ENCODE measurements at regions of chr4 and their contacts with region 1.

Region 1: GRCh38 chr4:78644744-78645330 is 93.3 kb downstream of the ANXA3 start:
- DNase-seq: peak; percentile 57
- H3K4me3 ChIP-seq: no peak overlapping the region
- H3K27ac ChIP-seq: peak overlapping the region; percentile 88 to 89; a peak in 3 of 4 replicates
- H3K4me1 ChIP-seq: peaks cover 6 to 11% of the 10 kb centered on the region in 2 experiments
- H3K27me3 ChIP-seq: no peaks in the 10 kb centered on the region
- CTCF ChIP-seq: peak; percentile 87
- EP300 ChIP-seq: no peak
- RAD21 ChIP-seq: peak; percentile 74

Region 2: DNA sequence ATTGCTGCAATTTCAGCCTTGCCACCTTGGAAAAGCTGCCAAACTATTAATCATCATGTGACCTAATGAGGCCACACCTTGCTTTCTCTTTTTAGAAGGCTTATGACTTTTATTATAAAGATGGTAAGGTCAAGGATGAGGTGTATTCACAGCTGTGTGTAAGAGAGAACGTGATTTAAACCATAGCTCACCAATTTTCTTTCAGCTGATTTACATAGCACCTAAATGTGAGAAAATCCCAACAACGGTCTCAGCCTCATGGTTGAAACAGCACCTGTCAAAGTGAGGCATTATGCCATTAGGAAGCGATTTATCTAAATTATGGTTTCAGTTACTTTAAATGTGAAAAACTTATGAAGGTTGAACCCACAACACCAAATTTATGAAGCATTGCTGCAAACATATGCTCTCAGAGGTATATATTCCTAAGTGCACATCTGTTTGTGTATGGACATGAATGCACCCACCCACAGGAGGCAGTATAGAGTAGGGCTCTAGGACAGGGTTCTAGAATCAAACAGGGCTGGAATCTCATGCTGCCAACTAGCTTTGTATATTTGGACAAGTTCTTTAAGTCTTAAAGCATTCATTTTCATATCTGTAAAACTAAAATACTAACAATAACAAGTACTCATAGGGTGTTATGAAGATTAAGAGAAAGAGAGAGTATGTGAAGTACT is 52.6 kb before region 1 on chr4:
- CTCF ChIA-PET with region 1: no interaction called
- POLR2A ChIA-PET with region 1: no interaction called
- DNase-seq: peak; percentile 3
- H3K4me3 ChIP-seq: no peak overlapping the region
- H3K27ac ChIP-seq: no peak overlapping the region
- H3K4me1 ChIP-seq: no peaks in the 10 kb centered on the region
- H3K27me3 ChIP-seq: no peaks in the 10 kb centered on the region
- CTCF ChIP-seq: peak; percentile 44
- EP300 ChIP-seq: no peak
- RAD21 ChIP-seq: no peak

Region 3: DNA sequence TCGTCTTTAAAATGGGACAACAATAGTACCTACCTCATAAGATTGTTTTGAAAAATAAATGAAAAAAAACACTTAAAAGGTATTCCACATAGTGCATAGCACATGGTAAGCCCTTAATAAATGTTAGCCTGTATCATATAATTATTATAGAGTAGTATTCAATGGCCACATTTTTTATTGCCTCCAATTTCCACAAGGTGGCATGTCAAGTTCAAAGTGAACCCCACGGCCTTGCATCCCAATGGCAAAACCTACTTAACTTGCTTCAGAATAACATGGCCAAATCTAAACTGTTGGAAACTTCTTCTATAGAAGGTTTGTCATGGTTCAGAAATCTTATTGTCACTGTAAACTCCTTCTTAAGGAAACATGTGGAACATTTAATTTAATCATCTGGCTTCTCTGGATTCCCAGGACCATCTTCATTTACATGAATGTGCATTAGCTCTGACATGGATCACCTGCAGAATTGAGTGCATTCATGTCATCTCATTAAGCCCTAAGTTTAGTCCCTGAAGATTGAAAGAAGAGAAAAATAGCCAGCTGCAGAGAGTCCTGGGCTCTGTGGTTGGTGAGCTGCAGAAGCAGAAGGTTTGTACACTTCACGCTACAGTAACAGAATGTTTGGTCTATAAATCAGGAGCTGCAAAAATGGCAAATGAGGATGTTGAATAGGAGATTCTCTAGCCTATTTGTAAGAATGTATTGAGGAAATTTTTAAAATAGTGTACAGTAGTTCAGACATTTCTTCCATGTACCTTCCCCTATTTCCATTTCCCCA is 32.2 kb before region 1 on chr4:
- CTCF ChIA-PET with region 1: interaction called, 15 read pairs
- POLR2A ChIA-PET with region 1: no interaction called
- DNase-seq: peak; percentile 35
- H3K4me3 ChIP-seq: no peak overlapping the region
- H3K27ac ChIP-seq: no peak overlapping the region
- H3K4me1 ChIP-seq: peaks cover 0 to 9% of the 10 kb centered on the region in 2 experiments; a peak in 1 of 4 replicates
- H3K27me3 ChIP-seq: no peaks in the 10 kb centered on the region
- CTCF ChIP-seq: peak; percentile 81
- EP300 ChIP-seq: no peak
- RAD21 ChIP-seq: peak; percentile 87

Region 4: GRCh38 chr4:78634011-78634664 is 10.7 kb before region 1 on chr4:
- CTCF ChIA-PET with region 1: interaction called, 24 read pairs
- POLR2A ChIA-PET with region 1: no interaction called
- DNase-seq: no peak
- H3K4me3 ChIP-seq: no peak overlapping the region
- H3K27ac ChIP-seq: no peak overlapping the region
- H3K4me1 ChIP-seq: peaks cover 0 to 15% of the 10 kb centered on the region in 2 experiments; a peak in 1 of 4 replicates
- H3K27me3 ChIP-seq: no peaks in the 10 kb centered on the region
- CTCF ChIP-seq: no peak
- EP300 ChIP-seq: no peak
- RAD21 ChIP-seq: no peak

Region 5: DNA sequence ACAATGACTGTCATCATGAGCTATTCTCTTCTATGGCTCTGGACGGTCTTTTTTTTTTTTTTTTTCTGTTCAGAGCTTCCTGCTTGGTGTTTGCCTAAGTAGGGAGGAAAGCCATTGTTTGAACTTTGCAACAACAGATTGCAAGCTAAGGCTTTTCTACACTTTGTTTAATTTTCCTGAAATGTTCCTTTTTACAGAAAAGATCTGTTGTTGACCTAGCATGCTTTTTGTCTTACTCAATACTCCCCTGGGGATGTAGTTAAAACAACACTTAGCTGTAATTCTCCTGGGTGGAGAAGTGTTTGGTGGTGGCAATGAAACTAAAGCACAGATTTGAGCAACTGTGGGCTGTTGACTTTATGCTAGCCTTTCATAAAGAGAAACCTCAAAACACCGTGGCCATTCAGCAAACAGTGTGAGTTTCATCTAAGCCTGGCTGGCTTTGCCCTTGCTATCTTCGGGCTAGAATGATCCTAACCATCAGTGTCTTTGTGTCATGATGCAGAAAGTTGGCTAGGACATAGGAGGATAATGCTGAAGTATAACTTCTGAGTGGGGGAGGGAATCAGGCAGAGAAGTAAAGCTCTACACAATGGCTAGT is 17.2 kb after region 1 on chr4:
- CTCF ChIA-PET with region 1: interaction called, 10 read pairs
- POLR2A ChIA-PET with region 1: no interaction called
- DNase-seq: no peak
- H3K4me3 ChIP-seq: no peak overlapping the region
- H3K27ac ChIP-seq: no peak overlapping the region
- H3K4me1 ChIP-seq: peaks cover under 1 to 28% of the 10 kb centered on the region in 2 experiments; a peak in 2 of 4 replicates
- H3K27me3 ChIP-seq: no peaks in the 10 kb centered on the region
- CTCF ChIP-seq: no peak
- EP300 ChIP-seq: no peak
- RAD21 ChIP-seq: no peak

Region 6: GRCh38 chr4:78864405-78865024 is 219.7 kb after region 1 on chr4:
- CTCF ChIA-PET with region 1: interaction called, 14 read pairs
- POLR2A ChIA-PET with region 1: no interaction called
- DNase-seq: peak; percentile 34
- H3K4me3 ChIP-seq: no peak overlapping the region; a peak in 1 of 4 replicates
- H3K27ac ChIP-seq: no peak overlapping the region
- H3K4me1 ChIP-seq: no peaks in the 10 kb centered on the region; a peak in 1 of 4 replicates
- H3K27me3 ChIP-seq: no peaks in the 10 kb centered on the region
- CTCF ChIP-seq: peak; percentile 91
- EP300 ChIP-seq: no peak
- RAD21 ChIP-seq: peak; percentile 94

Measured in SK-N-SH (cell line).